Activated CD4-positive, alpha-beta T cell treated with anti-CD3 and anti-CD28 coated beads for 36 hours (primary cell): ENCODE measurements at regions of chr3 and their contacts with region 1.

Region 1: DNA sequence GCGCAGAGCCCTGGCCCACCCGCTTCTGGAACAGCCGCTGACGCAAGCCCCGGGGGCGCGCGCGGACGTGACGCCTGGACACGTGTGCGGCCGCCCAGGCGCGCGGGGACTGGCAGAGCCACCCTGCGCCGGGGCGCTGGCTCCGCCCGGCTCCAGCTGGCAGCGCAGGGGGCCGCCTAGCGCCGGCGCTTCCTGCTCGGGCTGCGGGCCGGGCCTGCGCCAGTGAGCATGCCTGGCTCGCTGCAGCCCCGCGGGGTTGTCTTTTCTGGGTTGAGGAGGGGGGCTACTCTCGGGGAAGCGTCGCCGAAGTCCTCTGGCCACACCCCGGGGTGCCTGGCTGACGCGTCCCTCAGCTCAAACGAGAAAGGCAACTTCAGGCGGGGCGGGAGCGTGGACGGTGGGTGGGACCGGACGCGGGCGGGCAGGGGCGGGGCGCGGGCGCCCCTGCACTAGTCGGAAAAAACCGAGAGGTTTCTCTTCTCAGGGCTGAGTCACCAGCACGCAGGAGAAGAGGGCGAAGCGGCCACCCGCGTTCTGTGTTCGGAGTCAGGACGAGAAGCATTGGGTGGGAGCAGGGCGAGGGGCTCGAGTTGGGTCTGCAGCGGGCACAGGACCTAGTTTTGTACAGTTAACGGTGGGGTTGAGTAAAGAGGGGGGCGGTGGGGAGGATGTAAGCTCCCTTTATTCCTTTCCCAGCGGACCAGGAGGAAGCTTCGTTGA is at the start of gene SIAH2:
- DNase-seq: peak; percentile 96
- ATAC-seq: peak; percentile 72
- H3K4me3 Mint-ChIP-seq: peak within 1 kb of the TSS; percentile 85
- H3K27ac Mint-ChIP-seq: peak within 1 kb of the TSS; percentile 98
- H3K4me1 Mint-ChIP-seq: peaks cover 51% of the 10 kb centered on the region
- H3K27me3 Mint-ChIP-seq: no peaks in the 10 kb centered on the region
- total RNA-seq, gene SIAH2: 85.7 to 154 TPM

Region 2: DNA sequence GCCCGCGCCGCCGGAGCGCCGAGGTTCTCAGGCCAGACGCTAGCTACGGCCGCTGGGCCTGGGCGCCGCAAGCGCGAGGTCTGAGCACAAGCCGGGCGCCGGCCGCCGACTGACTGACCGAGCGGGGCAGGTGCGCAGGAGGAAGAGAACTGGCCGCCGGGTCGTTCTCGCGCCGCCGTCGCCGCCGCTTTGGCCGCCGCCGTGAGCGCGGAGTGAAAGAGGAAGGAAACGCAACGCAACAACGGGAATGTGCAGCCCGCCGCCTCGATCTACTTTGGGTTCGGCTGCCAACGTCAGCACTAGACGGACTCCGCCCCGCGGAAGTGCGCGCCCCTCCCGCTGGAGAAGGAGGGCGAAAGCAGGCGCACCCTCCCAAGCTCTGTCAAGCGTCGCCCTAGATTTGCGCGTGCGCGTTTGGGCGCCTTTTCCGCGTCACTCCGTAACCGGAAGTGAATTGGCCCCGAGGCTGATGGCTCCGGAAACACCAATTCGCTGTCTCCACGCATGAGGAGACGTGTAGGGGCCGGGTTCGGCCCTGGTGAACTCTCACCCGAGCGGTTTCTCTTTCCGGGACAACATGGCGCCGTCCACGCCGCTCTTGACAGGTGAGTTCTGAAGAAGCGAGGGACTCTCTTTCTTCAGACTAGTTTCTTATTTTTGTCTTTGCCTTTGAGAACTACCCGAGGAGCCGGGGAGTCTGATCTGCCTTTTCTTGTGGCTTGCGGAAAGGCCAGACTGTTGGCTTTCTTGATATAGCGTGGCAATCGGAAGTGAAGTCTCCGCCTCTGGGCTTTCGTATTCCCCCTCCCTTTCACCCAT is 216.8 kb before region 1 on chr3 and contains the starts of genes EIF2A and SERP1:
- CTCF ChIA-PET with region 1: interaction called, 3 read pairs
- POLR2A ChIA-PET with region 1: interaction called, 8 read pairs
- intact Hi-C with region 1: loop called (anchors 1 kb)
- DNase-seq: peak; percentile 99
- ATAC-seq: peak; percentile 92
- H3K4me3 Mint-ChIP-seq: peak within 1 kb of the TSS; percentile 90
- H3K27ac Mint-ChIP-seq: peak within 1 kb of the TSS; percentile 96
- H3K4me1 Mint-ChIP-seq: peaks cover 68% of the 10 kb centered on the region
- H3K27me3 Mint-ChIP-seq: no peaks in the 10 kb centered on the region
- total RNA-seq, gene EIF2A: 119 to 182 TPM
- total RNA-seq, gene SERP1: 84.6 to 96.1 TPM

Region 3: GRCh38 chr3:150721285-150722130 is 41.8 kb before region 1 on chr3:
- CTCF ChIA-PET with region 1: interaction called, 34 read pairs
- POLR2A ChIA-PET with region 1: interaction called, 6 read pairs
- intact Hi-C with region 1: loop called (anchors 1 kb)
- DNase-seq: no peak
- ATAC-seq: peak; percentile 64
- H3K4me3 Mint-ChIP-seq: no peak overlapping the region
- H3K27ac Mint-ChIP-seq: no peak overlapping the region
- H3K4me1 Mint-ChIP-seq: peaks cover 29% of the 10 kb centered on the region
- H3K27me3 Mint-ChIP-seq: no peaks in the 10 kb centered on the region

Region 4: DNA sequence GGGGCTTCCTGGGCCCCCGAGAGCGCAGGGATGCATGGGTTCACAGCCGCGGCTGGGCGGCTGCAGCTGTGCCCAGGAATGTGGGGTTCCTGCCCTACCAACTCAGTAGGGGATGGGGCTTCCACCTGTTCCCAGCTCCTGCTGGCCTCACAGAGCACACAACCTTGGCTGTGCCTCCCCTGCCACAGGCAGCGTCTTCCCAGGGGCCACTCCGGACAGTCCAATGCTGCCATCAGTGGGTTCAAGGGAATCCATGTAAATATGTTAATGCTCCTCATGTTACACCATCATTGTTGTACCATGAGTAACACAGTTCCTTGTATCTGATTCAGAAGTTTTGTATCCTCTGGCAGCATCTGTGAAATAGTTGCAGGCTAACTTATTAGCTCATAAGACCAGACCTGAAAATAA is 11.8 kb after region 1 on chr3:
- CTCF ChIA-PET with region 1: interaction called, 11 read pairs
- POLR2A ChIA-PET with region 1: interaction called, 5 read pairs
- intact Hi-C with region 1: no loop called
- DNase-seq: no peak
- ATAC-seq: no peak
- H3K4me3 Mint-ChIP-seq: no peak overlapping the region
- H3K27ac Mint-ChIP-seq: no peak overlapping the region
- H3K4me1 Mint-ChIP-seq: no peaks in the 10 kb centered on the region
- H3K27me3 Mint-ChIP-seq: no peaks in the 10 kb centered on the region

Region 5: DNA sequence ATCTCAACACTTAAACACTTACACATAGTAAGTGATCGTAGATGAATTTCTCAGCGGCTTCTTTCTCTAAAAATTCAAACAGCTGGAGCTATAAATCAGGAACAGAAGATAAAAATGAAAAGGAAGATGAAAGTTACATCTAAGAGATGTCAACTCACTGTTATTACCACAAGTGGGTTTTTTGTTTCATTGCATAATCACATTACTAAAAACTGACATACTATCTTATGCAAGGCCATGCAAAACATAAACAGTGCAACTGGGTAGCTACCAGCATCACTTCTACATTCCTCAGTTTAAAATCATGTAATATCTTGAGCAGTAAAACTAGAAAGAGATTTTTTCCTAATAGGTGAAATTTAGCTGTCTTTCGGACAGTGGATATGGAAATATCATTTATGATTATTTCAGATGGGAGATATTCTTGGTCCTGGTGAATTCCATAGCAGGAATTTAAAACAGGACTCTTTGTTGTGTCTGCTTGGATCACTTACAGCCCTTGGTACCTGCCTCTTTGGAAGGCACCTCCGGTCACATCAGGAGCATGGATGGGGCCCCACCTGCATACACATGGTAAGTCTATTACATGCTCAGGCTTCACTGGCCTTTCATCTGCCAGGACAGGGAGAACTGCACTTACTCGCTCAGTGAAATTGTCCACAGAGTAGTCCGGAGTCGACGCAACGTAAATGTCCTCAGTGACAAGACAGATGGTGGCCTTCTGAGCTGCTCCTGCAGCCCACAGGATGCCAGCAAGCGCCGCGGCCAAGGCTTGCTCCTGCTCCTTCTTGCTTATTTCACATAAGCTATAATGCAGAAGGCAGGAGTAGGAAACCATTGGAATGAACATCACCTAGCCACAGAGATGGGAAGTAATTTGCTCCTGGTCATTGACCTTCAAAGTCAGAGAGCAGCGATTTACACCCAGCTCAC is 127.3 kb after region 1 on chr3:
- CTCF ChIA-PET with region 1: no interaction called
- POLR2A ChIA-PET with region 1: no interaction called
- intact Hi-C with region 1: no loop called
- DNase-seq: no peak
- ATAC-seq: no peak
- H3K4me3 Mint-ChIP-seq: no peak overlapping the region
- H3K27ac Mint-ChIP-seq: no peak overlapping the region
- H3K4me1 Mint-ChIP-seq: no peaks in the 10 kb centered on the region
- H3K27me3 Mint-ChIP-seq: peaks cover 7% of the 10 kb centered on the region

Region 6: GRCh38 chr3:151733613-151734012 is 970.3 kb after region 1 on chr3 and contains the start of gene AADACL2:
- CTCF ChIA-PET with region 1: no interaction called
- POLR2A ChIA-PET with region 1: no interaction called
- intact Hi-C with region 1: no loop called
- DNase-seq: no peak
- ATAC-seq: no peak
- H3K4me3 Mint-ChIP-seq: no peak within 1 kb of the TSS
- H3K27ac Mint-ChIP-seq: no peak within 1 kb of the TSS
- H3K4me1 Mint-ChIP-seq: no peaks in the 10 kb centered on the region
- H3K27me3 Mint-ChIP-seq: peaks cover 2% of the 10 kb centered on the region
- total RNA-seq, gene AADACL2: not detected

Region 7: GRCh38 chr3:152193673-152194267 is 1430.5 kb after region 1 on chr3:
- CTCF ChIA-PET with region 1: no interaction called
- POLR2A ChIA-PET with region 1: no interaction called
- intact Hi-C with region 1: loop called in 1 of 2 experiments (anchors 10 kb)
- DNase-seq: peak; percentile 46
- ATAC-seq: peak; percentile 49
- H3K4me3 Mint-ChIP-seq: peak overlapping the region; percentile 66
- H3K27ac Mint-ChIP-seq: peak overlapping the region; percentile 74
- H3K4me1 Mint-ChIP-seq: peaks cover 83% of the 10 kb centered on the region
- H3K27me3 Mint-ChIP-seq: no peaks in the 10 kb centered on the region